BJ (cell line): ENCODE measurements at regions of chr12 and their contacts with region 1.

Region 1: DNA sequence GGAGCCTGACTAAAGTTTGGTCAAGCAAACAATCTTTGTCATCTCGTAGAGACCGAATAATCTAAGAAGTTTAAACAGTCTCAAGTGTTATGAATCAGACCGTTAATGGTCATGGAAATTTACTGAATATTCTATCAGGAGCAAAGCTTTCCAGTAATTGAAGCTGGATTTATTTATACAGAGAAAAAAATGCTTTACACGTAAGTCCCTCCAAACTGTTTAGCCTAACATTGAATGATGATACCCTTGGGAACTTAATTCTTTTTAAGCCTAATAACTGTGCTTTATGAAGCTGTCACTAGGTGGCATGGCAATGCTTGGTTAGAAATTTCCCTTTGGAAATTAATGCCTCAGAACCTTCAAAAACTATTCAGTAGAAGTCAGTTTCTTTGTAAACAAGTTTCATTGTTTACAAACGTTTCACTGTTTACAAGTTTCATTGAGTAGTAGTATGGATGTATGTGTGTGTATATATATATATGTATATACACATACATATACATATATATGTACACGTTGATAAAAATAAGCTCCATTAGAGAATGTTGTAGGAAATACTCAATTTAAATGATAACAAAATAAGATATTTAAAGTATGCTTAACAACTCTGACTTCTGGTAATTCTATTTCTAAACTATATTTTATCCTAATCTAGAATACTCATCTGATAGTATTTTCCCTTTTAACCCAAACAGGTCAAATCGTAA is 32.1 kb downstream of the DEPDC4 start:
- DNase-seq: no peak
- H3K4me3 ChIP-seq: no peak overlapping the region
- H3K27me3 ChIP-seq: no peaks in the 10 kb centered on the region
- CTCF ChIP-seq: peak; percentile 76

Region 2: GRCh38 chr12:100404769-100405407 is 170.1 kb after region 1 on chr12:
- CTCF ChIA-PET with region 1: interaction called, 13 read pairs
- POLR2A ChIA-PET with region 1: no interaction called
- DNase-seq: no peak
- H3K4me3 ChIP-seq: no peak overlapping the region
- H3K27me3 ChIP-seq: no peaks in the 10 kb centered on the region
- CTCF ChIP-seq: peak; percentile 67

Region 3: GRCh38 chr12:100554608-100555077 is 319.9 kb after region 1 on chr12:
- CTCF ChIA-PET with region 1: interaction called, 21 read pairs
- POLR2A ChIA-PET with region 1: no interaction called
- DNase-seq: peak; percentile 68
- H3K4me3 ChIP-seq: no peak overlapping the region
- H3K27me3 ChIP-seq: no peaks in the 10 kb centered on the region
- CTCF ChIP-seq: peak; percentile 87